ENCODE measurements at regions of chr4 and their contacts with region 1.

Region 1: GRCh38 chr4:76511947-76512346 is 76.9 kb downstream of the SHROOM3 start:
- DNase-seq: no peak
- H3K4me3 ChIP-seq: no peak overlapping the region
- H3K4me3 Mint-ChIP-seq: no peak overlapping the region
- H3K27ac Mint-ChIP-seq: peak overlapping the region; percentile 30
- H3K4me1 ChIP-seq: no peaks in the 10 kb centered on the region
- H3K4me1 Mint-ChIP-seq: peaks cover 11% of the 10 kb centered on the region
- H3K27me3 ChIP-seq: no peaks in the 10 kb centered on the region
- H3K27me3 Mint-ChIP-seq: no peaks in the 10 kb centered on the region
- CTCF ChIP-seq: no peak

Region 2: DNA sequence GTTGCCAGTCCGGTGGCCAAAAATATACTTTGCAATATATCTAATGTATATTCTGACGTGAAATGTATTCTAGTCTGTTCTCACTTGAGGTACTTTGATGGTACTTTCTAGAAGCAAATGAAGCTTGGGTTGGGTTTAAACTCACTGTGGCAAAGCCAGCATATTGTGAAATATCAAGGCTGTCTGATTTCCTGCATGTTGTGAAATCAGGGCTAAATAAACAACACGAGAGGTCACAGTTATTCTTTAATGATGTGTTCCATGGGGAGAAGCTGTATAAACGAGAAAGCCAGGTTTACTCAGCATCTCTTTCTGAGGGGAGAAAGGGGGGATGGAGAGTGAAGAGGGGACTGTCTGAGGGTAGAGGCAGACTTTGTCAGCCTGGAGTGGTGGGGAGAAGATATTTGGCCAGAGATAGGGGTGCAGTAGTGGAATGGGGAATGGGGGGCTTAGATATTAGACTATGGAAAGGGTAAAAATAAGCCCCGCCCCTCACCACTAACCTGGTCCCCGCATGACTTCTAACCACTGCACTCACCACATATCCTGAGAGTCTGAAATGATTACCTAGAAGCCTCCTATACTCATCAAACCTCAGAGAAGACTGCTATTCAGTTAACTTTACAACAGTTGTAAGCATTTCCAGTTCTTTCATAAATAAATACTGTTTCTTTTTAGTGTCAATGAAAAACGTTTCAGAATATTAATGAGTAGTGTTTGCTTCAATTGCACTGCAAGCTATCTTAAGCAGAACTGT is 292.5 kb before region 1 on chr4:
- CTCF ChIA-PET with region 1: no interaction called
- POLR2A ChIA-PET with region 1: no interaction called
- intact Hi-C with region 1: no loop called
- DNase-seq: peak in 1 of 2 experiments; percentile 21
- H3K4me3 ChIP-seq: no peak overlapping the region
- H3K4me3 Mint-ChIP-seq: peak overlapping the region; percentile 51
- H3K27ac Mint-ChIP-seq: peak overlapping the region; percentile 77
- H3K4me1 ChIP-seq: peaks cover 56% of the 10 kb centered on the region
- H3K4me1 Mint-ChIP-seq: peaks cover 46% of the 10 kb centered on the region
- H3K27me3 ChIP-seq: no peaks in the 10 kb centered on the region
- H3K27me3 Mint-ChIP-seq: no peaks in the 10 kb centered on the region
- CTCF ChIP-seq: no peak

Region 3: GRCh38 chr4:76546282-76547171 is 34.6 kb after region 1 on chr4:
- CTCF ChIA-PET with region 1: no interaction called
- POLR2A ChIA-PET with region 1: no interaction called
- intact Hi-C with region 1: loop called (anchors 5 kb)
- DNase-seq: no peak
- H3K4me3 ChIP-seq: no peak overlapping the region
- H3K4me3 Mint-ChIP-seq: no peak overlapping the region
- H3K27ac Mint-ChIP-seq: peak overlapping the region; percentile 69
- H3K4me1 ChIP-seq: peaks cover 25% of the 10 kb centered on the region
- H3K4me1 Mint-ChIP-seq: peaks cover 29% of the 10 kb centered on the region
- H3K27me3 ChIP-seq: no peaks in the 10 kb centered on the region
- H3K27me3 Mint-ChIP-seq: no peaks in the 10 kb centered on the region
- CTCF ChIP-seq: no peak

Region 4: DNA sequence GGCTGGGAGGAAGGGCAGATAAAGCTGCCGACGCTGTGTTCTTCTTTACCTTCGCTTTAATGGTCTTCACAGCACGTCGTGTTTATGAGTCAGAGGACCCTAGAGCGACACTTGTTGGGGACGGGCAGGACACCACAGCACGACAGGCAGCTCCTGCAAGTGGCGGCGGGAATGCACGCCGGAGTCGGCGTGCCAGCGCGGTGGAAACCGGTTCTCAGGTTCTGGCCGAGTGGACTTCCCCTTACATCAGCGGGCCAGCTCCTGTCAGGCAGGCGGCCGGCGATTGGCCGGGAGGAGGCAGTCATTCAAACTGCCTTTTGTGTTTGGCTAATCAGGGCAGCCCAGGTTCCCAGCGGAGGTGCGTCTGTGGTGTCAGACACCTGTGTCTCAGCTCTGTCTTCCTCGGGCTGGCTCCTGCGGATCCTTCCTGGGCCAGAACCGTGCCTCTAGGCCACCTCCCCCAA is 74.0 kb after region 1 on chr4:
- CTCF ChIA-PET with region 1: no interaction called
- POLR2A ChIA-PET with region 1: no interaction called
- intact Hi-C with region 1: loop called (anchors 2 kb)
- DNase-seq: peak; percentile 95
- H3K4me3 ChIP-seq: peak overlapping the region; percentile 46
- H3K4me3 Mint-ChIP-seq: peak overlapping the region; percentile 80
- H3K27ac Mint-ChIP-seq: peak overlapping the region; percentile 96
- H3K4me1 ChIP-seq: peaks cover 37% of the 10 kb centered on the region
- H3K4me1 Mint-ChIP-seq: peaks cover 22% of the 10 kb centered on the region
- H3K27me3 ChIP-seq: no peaks in the 10 kb centered on the region
- H3K27me3 Mint-ChIP-seq: no peaks in the 10 kb centered on the region
- CTCF ChIP-seq: peak in 1 of 2 experiments; percentile 39

Region 5: GRCh38 chr4:76733068-76733771 is 221.3 kb after region 1 on chr4:
- CTCF ChIA-PET with region 1: no interaction called
- POLR2A ChIA-PET with region 1: no interaction called
- intact Hi-C with region 1: loop called (anchors 1 kb)
- DNase-seq: peak in 1 of 2 experiments; percentile 42
- H3K4me3 ChIP-seq: no peak overlapping the region
- H3K4me3 Mint-ChIP-seq: no peak overlapping the region
- H3K27ac Mint-ChIP-seq: no peak overlapping the region
- H3K4me1 ChIP-seq: no peaks in the 10 kb centered on the region
- H3K4me1 Mint-ChIP-seq: no peaks in the 10 kb centered on the region
- H3K27me3 ChIP-seq: no peaks in the 10 kb centered on the region
- H3K27me3 Mint-ChIP-seq: no peaks in the 10 kb centered on the region
- CTCF ChIP-seq: peak; percentile 15 to 27

Region 6: GRCh38 chr4:76758290-76758882 is 246.4 kb after region 1 on chr4:
- CTCF ChIA-PET with region 1: no interaction called
- POLR2A ChIA-PET with region 1: no interaction called
- intact Hi-C with region 1: loop called (anchors 1 kb)
- DNase-seq: peak in 1 of 2 experiments; percentile 36
- H3K4me3 ChIP-seq: no peak overlapping the region
- H3K4me3 Mint-ChIP-seq: no peak overlapping the region
- H3K27ac Mint-ChIP-seq: no peak overlapping the region
- H3K4me1 ChIP-seq: no peaks in the 10 kb centered on the region; the same call in 1 of the 2 replicates
- H3K4me1 Mint-ChIP-seq: peaks cover 6% of the 10 kb centered on the region
- H3K27me3 ChIP-seq: no peaks in the 10 kb centered on the region
- H3K27me3 Mint-ChIP-seq: no peaks in the 10 kb centered on the region
- CTCF ChIP-seq: peak; percentile 57 to 65

Region 7: DNA sequence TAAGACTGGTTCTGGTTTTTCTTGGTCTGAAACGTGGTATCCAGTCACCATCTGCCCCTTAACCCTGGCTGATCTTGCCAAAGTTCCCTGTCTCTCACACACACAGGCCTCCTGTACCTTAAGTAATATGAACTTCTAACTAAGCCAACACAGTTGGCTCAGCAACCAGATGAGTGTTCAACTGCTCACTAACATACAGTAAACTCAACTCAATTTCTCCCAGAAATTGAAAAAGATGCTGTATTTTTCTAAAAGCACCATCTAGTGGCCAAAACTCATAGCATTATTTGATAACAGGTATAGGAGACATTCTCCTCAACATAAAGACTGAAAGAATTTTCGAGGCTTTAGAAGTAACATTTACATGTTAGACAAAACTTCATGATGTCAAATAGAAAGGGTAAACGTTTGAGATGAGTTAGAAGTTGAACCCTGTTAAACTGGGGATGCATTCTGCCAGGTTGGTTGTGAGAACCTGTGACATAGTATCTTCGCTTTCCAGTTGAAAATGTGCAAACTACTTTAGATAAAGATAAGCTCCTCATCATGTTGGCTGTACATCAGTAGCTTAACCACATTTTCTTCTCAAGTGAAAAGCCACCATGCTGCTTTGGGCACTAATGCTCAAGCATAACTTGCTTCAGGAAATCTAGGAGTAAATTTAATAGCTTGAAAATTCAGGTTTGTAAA is 532.7 kb after region 1 on chr4:
- CTCF ChIA-PET with region 1: no interaction called
- POLR2A ChIA-PET with region 1: no interaction called
- intact Hi-C with region 1: loop called (anchors 2 kb)
- DNase-seq: peak in 1 of 2 experiments; percentile 29
- H3K4me3 ChIP-seq: no peak overlapping the region
- H3K4me3 Mint-ChIP-seq: peak overlapping the region; percentile 18
- H3K27ac Mint-ChIP-seq: peak overlapping the region; percentile 67
- H3K4me1 ChIP-seq: peaks cover 51% of the 10 kb centered on the region
- H3K4me1 Mint-ChIP-seq: peaks cover 18% of the 10 kb centered on the region
- H3K27me3 ChIP-seq: no peaks in the 10 kb centered on the region
- H3K27me3 Mint-ChIP-seq: no peaks in the 10 kb centered on the region
- CTCF ChIP-seq: peak in 1 of 2 experiments; percentile 54

Measured in Caco-2 (cell line).